H1 (cell line): ENCODE measurements at regions of chr6 and their contacts with region 1.

Region 1: DNA sequence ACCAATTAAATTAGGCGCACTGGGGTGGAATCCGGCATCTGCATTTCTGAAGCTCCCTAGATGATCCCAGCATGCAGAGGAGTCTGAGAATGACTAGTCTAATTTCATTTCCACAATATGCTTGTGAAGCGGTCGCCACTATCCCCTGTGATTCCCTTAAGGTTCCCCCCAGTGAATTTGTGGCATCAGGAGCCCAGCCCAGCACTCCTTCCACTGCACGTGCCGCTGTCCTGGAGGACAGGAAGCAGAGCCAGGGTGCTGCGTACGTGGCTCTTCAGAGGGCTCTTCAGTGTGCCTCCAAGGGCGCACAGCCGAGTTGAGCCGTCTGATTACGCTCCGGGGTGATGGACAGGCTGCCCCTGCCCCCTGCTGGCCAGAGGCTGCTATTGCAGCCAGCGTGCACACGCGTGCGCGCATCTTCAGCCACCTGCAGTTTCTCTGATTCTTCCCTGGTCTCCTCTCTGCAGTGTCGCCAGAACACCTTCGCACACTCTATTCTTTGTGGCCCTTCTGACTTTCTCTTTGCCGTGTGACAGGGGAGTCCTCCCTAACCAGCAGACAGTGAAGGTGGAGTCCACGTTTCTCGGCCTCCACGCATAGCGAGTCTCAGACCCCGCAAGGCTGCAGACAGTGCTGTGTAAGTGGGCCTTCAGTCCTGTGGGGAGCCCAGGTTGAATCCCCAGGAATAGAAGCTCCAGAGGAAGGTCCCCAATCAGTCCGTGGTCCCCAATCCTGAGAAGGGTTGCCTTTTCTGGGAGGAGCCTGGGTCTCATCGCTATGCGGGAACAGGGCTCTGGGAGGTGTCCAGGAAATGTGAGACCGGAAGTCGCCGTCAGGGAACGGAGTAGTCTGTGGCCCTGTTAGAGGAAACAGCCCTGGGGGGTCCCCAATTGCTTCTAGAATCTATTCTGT is 16.5 kb upstream of the NCR2 start:
- DNase-seq: peak; percentile 82 to 90
- H3K4me3 ChIP-seq: peak overlapping the region in 2 of 4 experiments; percentile 16 to 47; a peak in 3 of 8 replicates
- H3K27ac ChIP-seq: no peak overlapping the region
- H3K4me1 ChIP-seq: peaks cover 0 to 13% (median 3%) of the 10 kb centered on the region in 4 experiments; a peak in 5 of 7 replicates
- H3K27me3 ChIP-seq: peaks cover 0 to 4% (median 2%) of the 10 kb centered on the region in 4 experiments; a peak in 1 of 7 replicates
- CTCF ChIP-seq: peak; percentile 97 to 100 (median 100)
- EP300 ChIP-seq: no peak
- POLR2A ChIP-seq: peak in 1 of 2 experiments; percentile 59; a peak in 2 of 3 replicates
- RAD21 ChIP-seq: peak; percentile 95 to 96

Region 2: DNA sequence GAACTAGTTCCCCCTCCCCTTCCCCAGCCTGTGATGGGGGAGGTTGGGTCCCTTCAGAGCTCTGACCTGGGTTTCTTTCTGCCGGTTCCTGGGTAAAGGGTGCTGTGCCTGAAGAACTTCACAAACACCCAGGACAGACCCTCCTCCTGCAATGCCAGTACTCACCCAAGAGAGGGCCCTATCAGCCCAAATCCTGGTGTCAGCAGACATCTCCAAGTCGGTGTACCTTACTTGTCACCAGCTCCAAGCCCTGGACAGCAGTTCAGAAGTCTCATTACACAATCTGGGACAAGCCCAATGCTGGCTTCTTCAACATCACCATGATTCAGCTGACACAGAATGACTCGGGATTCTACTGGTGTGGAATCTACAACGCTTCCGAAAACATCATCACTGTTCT is 90.3 kb before region 1 on chr6:
- CTCF ChIA-PET with region 1: interaction called, 19 read pairs
- POLR2A ChIA-PET with region 1: no interaction called
- DNase-seq: peak in 1 of 2 experiments; percentile 53
- H3K4me3 ChIP-seq: no peak overlapping the region
- H3K27ac ChIP-seq: no peak overlapping the region
- H3K4me1 ChIP-seq: no peaks in the 10 kb centered on the region
- H3K27me3 ChIP-seq: no peaks in the 10 kb centered on the region; a peak in 1 of 7 replicates
- CTCF ChIP-seq: peak; percentile 63 to 72 (median 66)
- EP300 ChIP-seq: no peak
- POLR2A ChIP-seq: no peak
- RAD21 ChIP-seq: peak; percentile 72 to 81

Region 3: GRCh38 chr6:41286544-41287346 is 32.2 kb before region 1 on chr6 and contains the start of gene TREM1:
- CTCF ChIA-PET with region 1: interaction called, 11 read pairs
- POLR2A ChIA-PET with region 1: no interaction called
- DNase-seq: peak in 1 of 2 experiments; percentile 39
- H3K4me3 ChIP-seq: no peak within 1 kb of the TSS
- H3K27ac ChIP-seq: no peak within 1 kb of the TSS
- H3K4me1 ChIP-seq: peaks cover 0 to 5% (median 0%) of the 10 kb centered on the region in 4 experiments; a peak in 2 of 7 replicates
- H3K27me3 ChIP-seq: peaks cover 0 to 12% (median 4%) of the 10 kb centered on the region in 4 experiments; a peak in 4 of 7 replicates
- CTCF ChIP-seq: no peak
- EP300 ChIP-seq: no peak
- POLR2A ChIP-seq: no peak
- RAD21 ChIP-seq: no peak
- total RNA-seq, gene TREM1: not detected in 2 replicates

Region 4: DNA sequence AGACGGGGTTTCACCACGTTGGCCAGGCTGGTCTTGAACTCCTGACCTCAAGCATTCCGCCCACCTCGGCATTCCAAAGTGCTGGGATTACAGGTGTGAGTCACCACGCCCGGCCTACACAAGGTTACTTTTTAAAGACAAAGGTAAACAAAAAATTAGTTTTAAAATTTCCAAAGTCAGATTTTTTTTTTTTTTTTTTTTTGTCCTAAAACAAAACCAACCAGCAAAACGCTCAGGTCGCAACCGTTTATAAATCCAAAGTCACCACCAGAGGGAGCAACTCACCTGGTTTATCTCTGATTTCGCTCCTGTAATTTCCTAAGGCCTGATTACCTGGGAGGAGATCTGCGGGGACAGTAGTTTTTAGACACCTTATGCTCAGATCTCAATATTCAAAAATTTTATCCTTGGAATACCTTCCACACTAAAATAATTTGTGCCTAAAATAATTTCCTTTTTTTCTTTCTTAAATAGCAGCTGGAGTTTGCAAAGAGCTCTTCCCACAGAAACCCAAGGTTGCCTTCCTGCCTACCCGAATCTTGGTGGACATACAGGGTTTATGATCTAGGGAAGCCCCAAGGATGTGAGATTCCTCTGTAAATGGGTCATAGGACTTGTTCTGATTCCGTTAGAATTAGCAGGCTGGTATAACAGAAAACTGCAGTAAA is 12.6 kb before region 1 on chr6:
- CTCF ChIA-PET with region 1: interaction called, 97 read pairs
- POLR2A ChIA-PET with region 1: interaction called, 3 read pairs
- DNase-seq: no peak
- H3K4me3 ChIP-seq: no peak overlapping the region
- H3K27ac ChIP-seq: no peak overlapping the region
- H3K4me1 ChIP-seq: peaks cover 0 to 3% (median 0%) of the 10 kb centered on the region in 4 experiments; a peak in 1 of 7 replicates
- H3K27me3 ChIP-seq: no peaks in the 10 kb centered on the region; a peak in 1 of 7 replicates
- CTCF ChIP-seq: peak in 2 of 3 experiments; percentile 63 to 67; a peak in 3 of 4 replicates
- EP300 ChIP-seq: no peak
- POLR2A ChIP-seq: no peak
- RAD21 ChIP-seq: peak; percentile 57 to 72

Region 5: GRCh38 chr6:41344876-41345275 is 26.0 kb after region 1 on chr6:
- CTCF ChIA-PET with region 1: interaction called, 20 read pairs
- POLR2A ChIA-PET with region 1: no interaction called
- DNase-seq: peak in 1 of 2 experiments; percentile 23
- H3K4me3 ChIP-seq: no peak overlapping the region
- H3K27ac ChIP-seq: no peak overlapping the region
- H3K4me1 ChIP-seq: 0 out of 7 replicates have a peak, but pooled peaks cover 0 to 2% (median 0%) of the 10 kb centered on the region in 4 experiments
- H3K27me3 ChIP-seq: no peaks in the 10 kb centered on the region; a peak in 3 of 7 replicates
- CTCF ChIP-seq: no peak
- EP300 ChIP-seq: no peak
- POLR2A ChIP-seq: no peak
- RAD21 ChIP-seq: no peak

Region 6: DNA sequence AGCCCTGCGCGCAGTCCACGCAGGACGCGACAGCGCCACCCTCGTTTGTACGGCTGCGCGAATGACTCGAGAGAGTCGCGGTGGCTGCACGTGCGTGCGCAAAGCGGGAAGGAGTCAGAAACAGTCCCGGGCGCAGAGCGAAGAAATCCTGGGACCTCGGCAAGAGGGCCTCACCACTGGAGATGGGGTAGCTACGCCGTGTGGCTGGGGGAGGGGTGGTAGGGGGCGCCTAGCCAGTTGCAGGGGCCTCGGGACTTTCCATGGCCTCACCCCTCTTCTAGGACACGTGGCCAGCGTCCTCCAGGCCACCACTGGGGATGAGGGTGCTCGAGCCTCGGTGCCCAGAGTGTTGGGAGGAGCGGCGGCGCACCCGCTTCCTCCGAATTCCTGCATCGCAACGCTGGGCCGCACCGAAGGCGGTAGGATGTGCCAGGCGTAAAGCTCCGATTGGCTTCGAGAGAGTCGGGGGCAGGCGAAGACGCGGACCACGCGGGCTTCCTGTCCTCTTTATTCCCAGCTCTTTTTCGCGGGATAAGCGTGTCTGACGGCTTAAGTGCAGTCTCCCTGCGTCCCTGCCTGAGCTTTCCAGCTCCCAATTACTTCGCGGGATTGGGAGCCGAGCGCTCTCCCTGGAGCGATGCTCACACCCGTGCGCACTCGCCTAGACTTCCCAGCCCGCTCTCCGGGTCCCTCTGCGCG is 55.2 kb after region 1 on chr6:
- CTCF ChIA-PET with region 1: no interaction called
- POLR2A ChIA-PET with region 1: no interaction called
- DNase-seq: peak in 1 of 2 experiments; percentile 84
- H3K4me3 ChIP-seq: peak overlapping the region; percentile 5 to 54 (median 24); a peak in 6 of 8 replicates
- H3K27ac ChIP-seq: no peak overlapping the region
- H3K4me1 ChIP-seq: peaks cover 5 to 42% (median 26%) of the 10 kb centered on the region in 4 experiments
- H3K27me3 ChIP-seq: peaks cover 88 to 100% (median 100%) of the 10 kb centered on the region in 4 experiments
- CTCF ChIP-seq: no peak
- EP300 ChIP-seq: no peak
- POLR2A ChIP-seq: no peak
- RAD21 ChIP-seq: no peak

Region 7: DNA sequence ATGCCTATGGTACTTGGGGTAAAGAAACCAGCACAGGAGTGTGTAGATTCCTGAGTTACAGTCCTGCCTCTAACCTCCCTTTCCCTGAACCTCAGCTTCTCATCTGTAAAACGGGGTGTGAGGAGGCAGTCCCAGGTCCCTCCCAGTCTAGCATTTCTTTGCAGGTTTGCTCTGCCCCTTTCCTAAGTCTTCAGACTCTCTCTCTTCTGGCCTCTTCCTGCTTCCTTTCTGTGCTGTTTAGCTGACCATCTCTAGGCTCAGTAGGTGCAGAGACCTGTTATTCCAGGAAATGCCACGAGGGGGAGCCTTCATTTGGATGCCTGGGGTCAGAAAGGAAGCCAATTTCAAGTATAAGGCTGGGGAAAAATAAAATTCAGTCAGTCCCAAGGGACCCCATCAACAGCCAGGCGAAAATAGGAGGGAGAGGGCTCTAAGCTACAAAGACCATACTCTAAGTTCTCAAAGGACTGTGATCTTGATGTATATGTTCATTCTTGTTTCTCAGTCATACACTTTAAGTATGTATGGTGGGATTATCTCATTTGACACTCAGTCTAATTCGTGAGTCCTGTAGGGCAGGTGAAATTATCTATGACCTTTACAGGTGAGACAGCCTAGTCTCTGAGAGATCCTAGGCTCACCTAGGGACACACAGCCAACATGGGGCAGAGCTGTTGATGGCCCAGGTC is 105.6 kb after region 1 on chr6:
- CTCF ChIA-PET with region 1: no interaction called
- POLR2A ChIA-PET with region 1: no interaction called
- DNase-seq: peak in 1 of 2 experiments; percentile 97
- H3K4me3 ChIP-seq: no peak overlapping the region
- H3K27ac ChIP-seq: no peak overlapping the region
- H3K4me1 ChIP-seq: peaks cover 3 to 29% (median 8%) of the 10 kb centered on the region in 4 experiments
- H3K27me3 ChIP-seq: peaks cover 24 to 62% (median 54%) of the 10 kb centered on the region in 4 experiments
- CTCF ChIP-seq: peak; percentile 34 to 88 (median 85)
- EP300 ChIP-seq: no peak
- POLR2A ChIP-seq: no peak
- RAD21 ChIP-seq: peak; percentile 72 to 82

Region 8: DNA sequence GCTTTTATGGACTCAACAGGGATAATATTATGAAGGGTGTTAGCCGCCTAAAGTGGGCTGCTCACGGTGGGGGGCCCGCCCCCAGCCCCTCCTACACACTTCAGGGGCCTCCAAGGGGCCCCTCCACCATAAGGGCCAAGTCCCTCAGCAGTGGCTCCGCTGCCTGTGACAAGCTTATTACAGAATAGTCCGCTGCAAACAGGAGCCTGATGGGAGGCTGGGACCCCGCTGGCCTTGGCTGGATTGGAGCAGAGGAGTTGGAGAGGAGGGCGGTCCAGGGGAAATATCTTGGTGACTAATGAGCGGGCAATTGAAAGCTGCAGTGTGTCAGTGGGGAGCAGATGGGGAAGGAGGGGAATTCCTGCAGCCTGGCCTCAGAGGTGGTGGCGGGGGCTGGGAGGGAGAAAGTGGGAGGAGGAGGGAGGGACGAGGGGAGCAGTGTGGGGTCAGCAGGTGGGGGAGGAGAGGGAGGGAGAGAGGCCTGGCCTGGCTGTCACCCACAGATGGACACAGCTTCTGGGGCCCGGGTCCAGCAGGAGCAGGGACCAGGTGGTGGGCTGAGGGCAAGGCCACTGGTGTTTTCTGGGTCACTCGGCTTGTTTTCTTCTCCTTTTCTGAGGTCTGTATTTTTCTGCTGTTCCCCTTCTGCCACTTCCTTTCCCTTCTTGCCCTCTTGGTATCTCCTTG is 169.7 kb after region 1 on chr6:
- CTCF ChIA-PET with region 1: no interaction called
- POLR2A ChIA-PET with region 1: no interaction called
- DNase-seq: peak in 1 of 2 experiments; percentile 62
- H3K4me3 ChIP-seq: peak overlapping the region in 3 of 4 experiments; percentile 19 to 27 (median 26); a peak in 2 of 8 replicates
- H3K27ac ChIP-seq: no peak overlapping the region
- H3K4me1 ChIP-seq: peaks cover 18 to 36% (median 30%) of the 10 kb centered on the region in 4 experiments
- H3K27me3 ChIP-seq: peaks cover 0 to 26% (median 17%) of the 10 kb centered on the region in 4 experiments; a peak in 4 of 7 replicates
- CTCF ChIP-seq: no peak
- EP300 ChIP-seq: no peak
- POLR2A ChIP-seq: no peak
- RAD21 ChIP-seq: no peak